ENCODE measurements at regions of chr13 and their contacts with region 1.

Region 1: DNA sequence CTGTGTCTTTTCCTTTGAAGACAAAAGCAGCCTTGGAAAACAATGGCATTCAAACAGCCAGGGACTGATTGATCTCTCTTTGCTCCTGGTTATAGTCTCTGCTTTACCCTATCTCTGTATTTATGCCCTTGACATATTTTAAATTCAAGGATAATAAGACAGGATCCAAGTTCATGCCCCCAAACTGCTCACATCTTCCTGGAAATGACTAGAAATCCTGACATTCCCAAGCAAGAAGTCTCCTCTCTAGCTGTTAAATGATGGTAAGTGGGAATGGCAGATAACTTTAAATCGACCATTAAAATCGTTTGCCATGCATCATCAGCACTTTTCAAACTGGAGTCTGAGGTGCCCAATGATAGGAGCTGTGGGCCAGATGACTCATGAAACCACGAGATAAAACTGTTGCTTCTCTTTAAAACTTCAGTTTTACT is 435.6 kb downstream of the FOXO1 start:
- DNase-seq: peak; percentile 74
- H3K4me3 ChIP-seq: no peak overlapping the region
- H3K27ac ChIP-seq: peak overlapping the region; percentile 3
- H3K4me1 ChIP-seq: peaks cover 12% of the 10 kb centered on the region
- H3K27me3 ChIP-seq: no peaks in the 10 kb centered on the region
- CTCF ChIP-seq: no peak
- POLR2A ChIP-seq: no peak

Region 2: DNA sequence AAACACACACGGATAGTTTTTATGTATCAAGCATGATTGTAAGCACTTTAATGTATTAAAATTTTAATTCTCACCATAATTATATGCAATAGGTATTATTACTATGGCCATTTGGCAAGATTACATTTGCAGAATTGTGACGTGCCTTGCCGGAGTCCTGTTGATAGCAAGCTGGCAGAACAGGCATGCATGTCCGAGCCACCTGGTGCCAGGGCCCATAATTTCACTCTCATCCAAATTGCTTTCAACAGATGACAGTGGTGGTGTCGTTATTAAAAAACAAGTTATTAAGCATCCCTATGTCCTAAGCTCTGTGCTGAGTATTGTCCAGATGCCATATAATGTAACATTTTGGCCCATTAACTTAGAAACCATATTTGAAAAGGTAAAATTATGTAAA is 61.3 kb after region 1 on chr13:
- CTCF ChIA-PET with region 1: no interaction called
- POLR2A ChIA-PET with region 1: no interaction called
- dilution Hi-C with region 1: no loop called
- intact Hi-C with region 1: loop called (anchors 5 kb)
- DNase-seq: no peak
- H3K4me3 ChIP-seq: no peak overlapping the region
- H3K27ac ChIP-seq: no peak overlapping the region
- H3K4me1 ChIP-seq: no peaks in the 10 kb centered on the region
- H3K27me3 ChIP-seq: no peaks in the 10 kb centered on the region
- CTCF ChIP-seq: no peak
- POLR2A ChIP-seq: no peak

Region 3: GRCh38 chr13:40371531-40372125 is 140.8 kb after region 1 on chr13:
- CTCF ChIA-PET with region 1: no interaction called
- POLR2A ChIA-PET with region 1: no interaction called
- dilution Hi-C with region 1: no loop called
- intact Hi-C with region 1: no loop called
- DNase-seq: no peak
- H3K4me3 ChIP-seq: no peak overlapping the region
- H3K27ac ChIP-seq: no peak overlapping the region
- H3K4me1 ChIP-seq: no peaks in the 10 kb centered on the region
- H3K27me3 ChIP-seq: no peaks in the 10 kb centered on the region
- CTCF ChIP-seq: no peak
- POLR2A ChIP-seq: no peak